ENCODE measurements at regions of chr2 and their contacts with region 1.

Region 1: GRCh38 chr2:191677646-191678436 is at the start of gene NABP1:
- DNase-seq: peak; percentile 99
- ATAC-seq: peak; percentile 84
- H3K4me3 Mint-ChIP-seq: peak within 1 kb of the TSS; percentile 97
- H3K27ac Mint-ChIP-seq: peak within 1 kb of the TSS; percentile 99
- H3K4me1 Mint-ChIP-seq: peaks cover 46% of the 10 kb centered on the region
- H3K27me3 Mint-ChIP-seq: no peaks in the 10 kb centered on the region
- total RNA-seq, gene NABP1: 52.4 to 54.1 TPM

Region 2: GRCh38 chr2:191066197-191066918 is 611.5 kb before region 1 on chr2:
- CTCF ChIA-PET with region 1: no interaction called
- POLR2A ChIA-PET with region 1: interaction called, 26 read pairs
- DNase-seq: peak; percentile 41
- ATAC-seq: peak; percentile 37
- H3K4me3 Mint-ChIP-seq: peak overlapping the region; percentile 72
- H3K27ac Mint-ChIP-seq: peak overlapping the region; percentile 85
- H3K4me1 Mint-ChIP-seq: peaks cover 70% of the 10 kb centered on the region
- H3K27me3 Mint-ChIP-seq: no peaks in the 10 kb centered on the region

Region 3: DNA sequence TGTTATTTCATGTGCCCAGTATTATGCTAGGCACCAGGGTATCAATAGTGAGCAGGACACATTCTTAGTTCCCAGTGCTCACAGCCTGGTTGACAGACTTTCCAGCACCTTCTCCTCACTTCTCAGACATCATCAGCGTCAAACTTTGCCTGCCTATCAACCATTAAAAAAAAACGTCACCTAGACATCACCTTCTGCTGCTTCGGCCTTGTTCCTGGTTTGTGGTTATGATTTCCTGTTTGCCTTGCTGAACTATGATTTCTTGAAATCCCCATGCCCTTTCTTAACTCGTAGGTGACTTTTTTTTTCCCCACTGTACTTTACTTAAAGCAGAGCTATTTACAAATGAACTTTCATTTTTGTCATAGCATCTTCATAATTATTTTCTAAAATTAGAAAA is 60.3 kb before region 1 on chr2:
- CTCF ChIA-PET with region 1: interaction called, 28 read pairs
- POLR2A ChIA-PET with region 1: interaction called, 173 read pairs
- DNase-seq: peak; percentile 71
- ATAC-seq: peak; percentile 95
- H3K4me3 Mint-ChIP-seq: peak overlapping the region; percentile 29
- H3K27ac Mint-ChIP-seq: peak overlapping the region; percentile 79
- H3K4me1 Mint-ChIP-seq: peaks cover 39% of the 10 kb centered on the region
- H3K27me3 Mint-ChIP-seq: no peaks in the 10 kb centered on the region

Region 4: GRCh38 chr2:191631754-191632153 is 46.1 kb before region 1 on chr2:
- CTCF ChIA-PET with region 1: interaction called, 37 read pairs
- POLR2A ChIA-PET with region 1: interaction called, 173 read pairs
- DNase-seq: no peak
- ATAC-seq: no peak
- H3K4me3 Mint-ChIP-seq: no peak overlapping the region
- H3K27ac Mint-ChIP-seq: no peak overlapping the region
- H3K4me1 Mint-ChIP-seq: peaks cover 41% of the 10 kb centered on the region
- H3K27me3 Mint-ChIP-seq: peaks cover 2% of the 10 kb centered on the region

Region 5: GRCh38 chr2:191660575-191661388 is 17.1 kb before region 1 on chr2:
- CTCF ChIA-PET with region 1: interaction called, 10 read pairs
- POLR2A ChIA-PET with region 1: interaction called, 14 read pairs
- DNase-seq: no peak
- ATAC-seq: no peak
- H3K4me3 Mint-ChIP-seq: no peak overlapping the region
- H3K27ac Mint-ChIP-seq: no peak overlapping the region
- H3K4me1 Mint-ChIP-seq: peaks cover 25% of the 10 kb centered on the region
- H3K27me3 Mint-ChIP-seq: no peaks in the 10 kb centered on the region

Region 6: DNA sequence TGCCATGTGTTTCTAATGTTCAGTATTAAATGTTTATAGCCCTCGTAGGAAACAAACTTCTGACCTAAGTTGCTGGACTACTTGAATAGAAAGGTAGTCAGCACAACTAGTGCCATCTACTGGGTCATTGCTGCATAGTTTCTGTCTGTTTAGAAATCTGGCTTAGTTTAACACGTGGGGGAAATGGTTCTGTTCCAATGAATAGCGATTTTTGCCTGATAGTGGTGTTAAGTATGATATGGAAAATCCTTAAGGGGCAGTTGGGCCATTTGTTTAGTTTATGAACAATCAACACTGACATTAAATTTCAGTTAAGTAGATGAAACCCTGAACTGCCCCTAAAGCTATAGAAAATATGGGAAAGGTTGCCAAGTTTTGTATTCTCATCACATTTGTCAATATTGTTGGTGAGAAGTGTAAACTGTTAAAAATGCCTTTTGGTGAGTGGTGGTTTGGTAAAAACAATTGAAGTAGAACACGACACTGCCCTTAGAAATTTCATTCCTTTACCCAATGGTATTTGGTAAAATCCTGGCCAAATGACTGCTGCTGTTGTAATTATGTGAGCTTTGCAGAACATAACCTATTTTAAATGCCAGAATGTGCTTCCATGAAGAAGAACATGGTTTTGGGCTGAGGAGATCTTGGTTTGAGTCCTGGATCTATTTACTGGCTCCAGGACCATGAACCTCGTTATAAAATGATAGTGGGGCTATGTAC is 13.3 kb after region 1 on chr2:
- CTCF ChIA-PET with region 1: interaction called, 7 read pairs
- POLR2A ChIA-PET with region 1: interaction called, 20 read pairs
- DNase-seq: peak; percentile 74
- ATAC-seq: peak; percentile 79
- H3K4me3 Mint-ChIP-seq: no peak overlapping the region
- H3K27ac Mint-ChIP-seq: no peak overlapping the region
- H3K4me1 Mint-ChIP-seq: peaks cover 18% of the 10 kb centered on the region
- H3K27me3 Mint-ChIP-seq: no peaks in the 10 kb centered on the region

Region 7: DNA sequence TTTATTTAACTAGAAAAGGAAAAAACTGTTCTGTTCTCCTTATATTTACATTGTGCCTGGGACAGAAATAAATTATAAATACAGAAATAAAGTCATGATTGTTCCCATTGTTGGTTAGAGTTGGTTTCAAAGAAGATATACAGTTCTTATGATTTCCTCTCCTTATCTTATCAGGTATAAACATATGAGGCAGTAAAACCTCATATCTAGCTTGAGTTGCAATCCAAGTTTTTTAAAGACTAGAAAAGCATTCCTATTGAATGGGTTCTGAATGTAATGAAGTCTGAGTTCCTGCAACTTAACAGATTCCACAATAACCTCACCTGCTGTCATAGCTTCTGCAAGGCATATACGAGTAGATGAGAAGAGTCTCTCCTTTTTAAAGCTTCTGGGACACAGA is 283.7 kb after region 1 on chr2:
- CTCF ChIA-PET with region 1: no interaction called
- POLR2A ChIA-PET with region 1: no interaction called
- DNase-seq: no peak
- ATAC-seq: no peak
- H3K4me3 Mint-ChIP-seq: no peak overlapping the region
- H3K27ac Mint-ChIP-seq: no peak overlapping the region
- H3K4me1 Mint-ChIP-seq: no peaks in the 10 kb centered on the region
- H3K27me3 Mint-ChIP-seq: peaks cover 5% of the 10 kb centered on the region

Measured in activated CD8-positive, alpha-beta T cell treated with anti-CD3 and anti-CD28 coated beads, Interleukin-2, amount 10 ng/mL, durations not matched to agents 7 days and 5 days (primary cell).